Activated B cell treated with CpG ODN at 0.5 μM for 24 hours (primary cell): ENCODE measurements at regions of chr17 and their contacts with region 1.

Region 1: DNA sequence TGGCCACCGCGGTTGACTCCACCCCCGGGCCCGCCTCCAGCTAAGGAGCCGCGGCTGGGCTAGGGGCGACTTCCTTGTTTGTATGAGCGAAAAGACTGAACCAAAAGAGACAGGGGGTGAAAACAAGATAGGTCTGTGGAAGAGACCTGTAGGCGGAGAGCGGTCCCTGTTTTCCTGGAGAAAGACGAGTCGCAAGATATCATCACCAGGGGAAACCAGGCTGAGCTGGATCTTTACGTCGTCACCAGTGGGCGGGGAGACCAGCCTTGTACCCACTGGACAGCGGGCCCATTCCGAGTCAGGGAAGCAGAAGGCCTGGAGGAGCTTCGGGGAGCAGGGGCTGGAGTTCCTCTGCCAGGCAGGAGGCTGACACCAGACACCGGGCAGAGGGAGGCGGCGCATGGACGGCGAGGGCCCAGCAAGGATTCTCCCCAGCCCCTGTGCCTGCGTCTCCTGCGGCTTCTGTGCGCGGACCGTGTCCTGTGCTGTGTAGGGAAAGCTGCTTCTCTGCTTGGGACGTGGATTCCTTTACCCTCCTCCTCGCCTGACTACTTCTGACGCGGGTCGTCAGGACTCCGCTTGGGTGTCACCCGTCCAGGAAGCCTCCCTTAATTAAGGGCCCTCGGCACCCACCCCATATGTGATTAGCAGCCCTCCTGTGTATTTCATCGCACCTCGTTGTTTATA is 10.3 kb upstream of the ARL4D start:
- DNase-seq: peak; percentile 94
- ATAC-seq: peak; percentile 76
- H3K4me3 Mint-ChIP-seq: peak overlapping the region; percentile 88
- H3K27ac Mint-ChIP-seq: peak overlapping the region; percentile 96
- H3K4me1 Mint-ChIP-seq: peaks cover 38% of the 10 kb centered on the region
- H3K27me3 Mint-ChIP-seq: no peaks in the 10 kb centered on the region
- CTCF ChIP-seq: no peak

Region 2: GRCh38 chr17:43327421-43327820 is 61.1 kb before region 1 on chr17:
- CTCF ChIA-PET with region 1: no interaction called
- POLR2A ChIA-PET with region 1: no interaction called
- intact Hi-C with region 1: no loop called
- DNase-seq: no peak
- ATAC-seq: no peak
- H3K4me3 Mint-ChIP-seq: no peak overlapping the region
- H3K27ac Mint-ChIP-seq: no peak overlapping the region
- H3K4me1 Mint-ChIP-seq: peaks cover 9% of the 10 kb centered on the region
- H3K27me3 Mint-ChIP-seq: no peaks in the 10 kb centered on the region
- CTCF ChIP-seq: no peak

Region 3: DNA sequence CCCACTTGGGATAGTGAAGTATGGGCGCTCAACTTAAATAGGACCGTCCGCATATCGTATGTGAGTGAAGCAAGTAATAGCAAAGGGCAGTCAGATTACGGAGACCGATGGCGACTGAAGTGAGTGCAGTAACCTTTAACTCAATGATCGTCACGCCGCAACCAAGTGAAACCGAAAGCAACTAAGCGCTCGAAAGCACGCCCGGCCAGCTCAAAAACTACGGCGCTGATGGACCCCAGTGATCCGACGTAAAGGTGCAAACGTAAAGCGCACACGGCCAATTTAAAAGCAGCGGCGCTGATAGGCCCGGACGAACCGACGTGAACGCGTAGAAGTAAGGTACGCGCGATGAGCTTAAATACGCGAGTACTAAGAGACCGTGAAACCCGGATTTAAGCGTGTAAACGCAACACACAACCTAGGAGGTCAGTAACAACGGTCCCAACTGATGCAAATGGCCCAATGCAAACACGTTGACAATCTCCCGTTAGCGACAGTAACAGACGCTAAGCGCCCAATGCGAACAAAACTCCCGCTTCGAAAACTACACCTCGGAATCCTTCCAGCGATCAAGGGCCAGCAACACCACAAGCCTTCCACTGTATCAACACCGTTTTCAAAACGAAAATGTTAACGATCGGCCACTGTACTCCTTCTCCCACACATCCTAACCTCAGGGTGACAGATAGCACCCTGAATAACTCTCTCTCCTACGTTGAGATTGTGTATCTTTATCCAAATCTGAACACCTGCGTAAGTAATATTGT is 27.6 kb before region 1 on chr17:
- CTCF ChIA-PET with region 1: interaction called, 5 read pairs
- POLR2A ChIA-PET with region 1: interaction called, 546 read pairs
- intact Hi-C with region 1: loop called (anchors 1 kb)
- DNase-seq: peak; percentile 65
- ATAC-seq: peak; percentile 76
- H3K4me3 Mint-ChIP-seq: peak overlapping the region; percentile 93
- H3K27ac Mint-ChIP-seq: peak overlapping the region; percentile 100
- H3K4me1 Mint-ChIP-seq: peaks cover 15% of the 10 kb centered on the region
- H3K27me3 Mint-ChIP-seq: peaks cover 2% of the 10 kb centered on the region
- CTCF ChIP-seq: no peak